ENCODE measurements at regions of chr1 and their contacts with region 1.

Region 1: GRCh38 chr1:18234790-18235242 is 127.2 kb downstream of the IGSF21 start:
- DNase-seq: peak; percentile 81
- H3K4me3 ChIP-seq: no peak overlapping the region; a peak in 1 of 4 replicates
- H3K27ac ChIP-seq: peak overlapping the region in 1 of 2 experiments; percentile 60; a peak in 1 of 4 replicates
- H3K4me1 ChIP-seq: peaks cover 0 to 12% of the 10 kb centered on the region in 2 experiments; a peak in 2 of 4 replicates
- H3K27me3 ChIP-seq: no peaks in the 10 kb centered on the region
- CTCF ChIP-seq: peak; percentile 52
- EP300 ChIP-seq: no peak; a peak in 1 of 4 replicates
- RAD21 ChIP-seq: peak; percentile 78

Region 2: DNA sequence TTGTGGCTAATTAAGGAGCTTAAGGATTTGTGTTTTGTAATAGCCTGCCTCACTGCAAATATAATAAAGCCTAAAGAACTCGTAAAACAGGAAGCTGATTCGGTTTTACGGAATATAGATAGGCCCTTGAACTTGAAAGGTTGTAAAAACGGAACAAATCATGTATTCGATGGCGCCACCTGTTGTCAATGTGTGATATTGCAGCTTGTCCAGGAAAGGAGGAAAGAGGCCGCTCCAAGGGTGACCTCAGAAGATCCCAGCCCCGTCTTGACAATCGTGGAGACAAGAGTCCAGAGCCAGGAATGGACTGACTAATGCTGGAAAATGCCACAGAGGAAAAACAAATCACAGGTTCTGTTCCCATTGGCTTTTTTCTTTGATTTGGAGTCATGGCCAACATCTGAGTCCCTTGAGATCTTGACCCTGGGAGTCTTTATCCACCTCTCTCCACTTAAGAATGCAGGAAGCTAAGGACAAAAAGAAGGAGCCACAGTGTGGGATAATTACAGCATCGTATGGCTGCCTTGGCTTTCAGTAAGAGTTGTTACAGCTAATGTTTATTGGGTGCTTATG is 134.2 kb before region 1 on chr1:
- CTCF ChIA-PET with region 1: interaction called, 12 read pairs
- POLR2A ChIA-PET with region 1: no interaction called
- DNase-seq: peak; percentile 70
- H3K4me3 ChIP-seq: no peak overlapping the region; a peak in 1 of 4 replicates
- H3K27ac ChIP-seq: no peak overlapping the region
- H3K4me1 ChIP-seq: no peaks in the 10 kb centered on the region; a peak in 1 of 4 replicates
- H3K27me3 ChIP-seq: no peaks in the 10 kb centered on the region
- CTCF ChIP-seq: peak; percentile 84
- EP300 ChIP-seq: no peak
- RAD21 ChIP-seq: peak; percentile 80

Region 3: DNA sequence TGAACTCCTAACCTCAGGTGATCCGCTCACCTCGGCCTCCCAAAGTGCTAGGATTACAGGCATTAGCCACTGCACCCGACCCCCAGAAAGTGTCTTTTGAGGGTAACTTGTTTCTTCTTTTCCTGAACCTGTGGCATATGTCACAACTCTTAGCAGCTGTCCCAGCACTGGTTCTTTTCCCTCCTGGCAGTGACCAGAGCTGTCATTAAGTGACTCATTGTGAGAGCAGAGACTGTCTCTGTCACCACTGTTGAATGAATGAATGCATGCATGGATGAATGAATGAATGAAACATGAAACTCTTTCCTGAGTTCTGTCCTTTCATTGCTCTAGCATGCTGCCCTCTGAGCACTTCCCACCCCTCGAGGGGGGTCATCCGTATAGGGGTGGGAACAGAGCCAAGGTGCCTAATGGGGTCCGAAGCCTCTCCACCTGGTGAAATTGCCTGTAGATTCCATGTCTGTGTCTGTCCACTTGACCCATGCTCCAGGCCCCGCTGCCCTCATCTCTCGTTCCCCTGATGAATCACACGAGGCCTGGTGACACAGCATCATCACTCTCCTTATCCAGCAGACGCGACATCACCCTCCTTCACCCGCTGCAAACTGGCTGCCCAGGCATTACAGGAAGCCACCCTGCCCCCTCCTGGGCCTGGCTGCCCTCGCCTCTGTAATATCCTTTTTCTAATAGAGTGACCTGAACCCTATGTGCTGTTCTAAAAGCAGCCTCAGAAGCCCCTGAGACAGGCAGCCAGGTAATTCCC is 52.2 kb before region 1 on chr1:
- CTCF ChIA-PET with region 1: interaction called, 12 read pairs
- POLR2A ChIA-PET with region 1: no interaction called
- DNase-seq: peak; percentile 73
- H3K4me3 ChIP-seq: no peak overlapping the region
- H3K27ac ChIP-seq: peak overlapping the region in 1 of 2 experiments; percentile 86; a peak in 2 of 4 replicates
- H3K4me1 ChIP-seq: peaks cover 0 to 22% of the 10 kb centered on the region in 2 experiments; a peak in 1 of 4 replicates
- H3K27me3 ChIP-seq: no peaks in the 10 kb centered on the region
- CTCF ChIP-seq: no peak
- EP300 ChIP-seq: 0 out of 4 replicates have a peak, but pooled peaks of 1 of the 2 experiments have one; percentile 25
- RAD21 ChIP-seq: peak; percentile 53

Region 4: DNA sequence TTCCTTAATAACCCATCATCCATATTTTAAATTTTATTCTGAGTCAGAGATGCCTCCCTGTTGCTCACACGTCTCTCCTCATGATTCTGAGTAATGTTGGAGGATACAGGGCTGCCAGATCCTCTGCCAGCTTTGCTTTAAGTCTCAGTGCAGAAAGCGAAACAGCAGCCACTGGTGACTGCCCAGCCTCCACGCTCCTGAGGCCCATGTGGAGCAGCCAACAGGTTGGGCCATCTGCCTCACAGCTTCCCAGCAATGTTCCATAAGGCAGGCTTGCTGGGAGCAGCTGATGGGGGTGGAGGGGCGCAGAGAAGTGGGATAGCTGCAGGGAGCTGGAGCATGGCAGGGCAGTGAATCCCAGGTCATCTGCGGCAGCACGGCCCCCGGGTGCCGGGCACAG is 23.1 kb before region 1 on chr1:
- CTCF ChIA-PET with region 1: interaction called, 22 read pairs
- POLR2A ChIA-PET with region 1: no interaction called
- DNase-seq: peak; percentile 32
- H3K4me3 ChIP-seq: no peak overlapping the region
- H3K27ac ChIP-seq: no peak overlapping the region
- H3K4me1 ChIP-seq: peaks cover 0 to 4% of the 10 kb centered on the region in 2 experiments; a peak in 1 of 4 replicates
- H3K27me3 ChIP-seq: no peaks in the 10 kb centered on the region
- CTCF ChIP-seq: no peak
- EP300 ChIP-seq: no peak
- RAD21 ChIP-seq: no peak

Region 5: GRCh38 chr1:18246543-18246942 is 11.7 kb after region 1 on chr1:
- CTCF ChIA-PET with region 1: interaction called, 16 read pairs
- POLR2A ChIA-PET with region 1: no interaction called
- DNase-seq: no peak
- H3K4me3 ChIP-seq: no peak overlapping the region
- H3K27ac ChIP-seq: no peak overlapping the region
- H3K4me1 ChIP-seq: peaks cover 0 to 10% of the 10 kb centered on the region in 2 experiments; a peak in 2 of 4 replicates
- H3K27me3 ChIP-seq: no peaks in the 10 kb centered on the region
- CTCF ChIP-seq: no peak
- EP300 ChIP-seq: no peak
- RAD21 ChIP-seq: no peak

Region 6: DNA sequence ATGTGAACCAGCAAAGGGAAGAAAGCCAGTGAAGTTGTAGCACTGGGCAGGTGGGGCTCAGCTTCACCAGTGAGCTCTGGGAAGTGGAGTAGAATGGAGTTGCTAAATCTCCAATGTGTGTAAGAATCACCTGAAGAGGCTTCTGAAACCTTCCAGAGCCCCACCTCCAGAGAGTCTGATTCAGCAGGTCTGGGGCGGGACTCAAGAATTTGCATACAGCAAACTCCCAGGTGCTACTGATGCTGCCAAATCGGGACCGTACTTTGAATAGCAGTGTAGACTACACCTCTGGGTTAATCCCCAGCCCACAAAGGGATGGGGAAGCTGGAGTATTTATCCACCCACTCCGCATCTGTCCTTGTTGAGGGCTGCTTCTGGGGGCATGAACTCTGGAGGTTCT is 27.1 kb after region 1 on chr1:
- CTCF ChIA-PET with region 1: interaction called, 12 read pairs
- POLR2A ChIA-PET with region 1: no interaction called
- DNase-seq: no peak
- H3K4me3 ChIP-seq: no peak overlapping the region
- H3K27ac ChIP-seq: no peak overlapping the region
- H3K4me1 ChIP-seq: no peaks in the 10 kb centered on the region
- H3K27me3 ChIP-seq: no peaks in the 10 kb centered on the region
- CTCF ChIP-seq: no peak
- EP300 ChIP-seq: no peak
- RAD21 ChIP-seq: no peak

Region 7: GRCh38 chr1:18288722-18289121 is 53.9 kb after region 1 on chr1:
- CTCF ChIA-PET with region 1: interaction called, 12 read pairs
- POLR2A ChIA-PET with region 1: no interaction called
- DNase-seq: peak; percentile 77
- H3K4me3 ChIP-seq: no peak overlapping the region
- H3K27ac ChIP-seq: peak overlapping the region in 1 of 2 experiments; percentile 73; a peak in 2 of 4 replicates
- H3K4me1 ChIP-seq: peaks cover 0 to 25% of the 10 kb centered on the region in 2 experiments; a peak in 2 of 4 replicates
- H3K27me3 ChIP-seq: no peaks in the 10 kb centered on the region
- CTCF ChIP-seq: no peak
- EP300 ChIP-seq: no peak; a peak in 1 of 4 replicates
- RAD21 ChIP-seq: no peak; the same call in 1 of the 2 replicates

Region 8: GRCh38 chr1:18396247-18396980 is 161.6 kb after region 1 on chr1:
- CTCF ChIA-PET with region 1: no interaction called
- POLR2A ChIA-PET with region 1: no interaction called
- DNase-seq: no peak
- H3K4me3 ChIP-seq: no peak overlapping the region
- H3K27ac ChIP-seq: no peak overlapping the region
- H3K4me1 ChIP-seq: no peaks in the 10 kb centered on the region; a peak in 1 of 4 replicates
- H3K27me3 ChIP-seq: no peaks in the 10 kb centered on the region
- CTCF ChIP-seq: no peak
- EP300 ChIP-seq: no peak
- RAD21 ChIP-seq: no peak

Measured in SK-N-SH (cell line).